Tibial artery (tissue), 4 donors: ENCODE measurements at regions of chr12 and their contacts with region 1.

Region 1: DNA sequence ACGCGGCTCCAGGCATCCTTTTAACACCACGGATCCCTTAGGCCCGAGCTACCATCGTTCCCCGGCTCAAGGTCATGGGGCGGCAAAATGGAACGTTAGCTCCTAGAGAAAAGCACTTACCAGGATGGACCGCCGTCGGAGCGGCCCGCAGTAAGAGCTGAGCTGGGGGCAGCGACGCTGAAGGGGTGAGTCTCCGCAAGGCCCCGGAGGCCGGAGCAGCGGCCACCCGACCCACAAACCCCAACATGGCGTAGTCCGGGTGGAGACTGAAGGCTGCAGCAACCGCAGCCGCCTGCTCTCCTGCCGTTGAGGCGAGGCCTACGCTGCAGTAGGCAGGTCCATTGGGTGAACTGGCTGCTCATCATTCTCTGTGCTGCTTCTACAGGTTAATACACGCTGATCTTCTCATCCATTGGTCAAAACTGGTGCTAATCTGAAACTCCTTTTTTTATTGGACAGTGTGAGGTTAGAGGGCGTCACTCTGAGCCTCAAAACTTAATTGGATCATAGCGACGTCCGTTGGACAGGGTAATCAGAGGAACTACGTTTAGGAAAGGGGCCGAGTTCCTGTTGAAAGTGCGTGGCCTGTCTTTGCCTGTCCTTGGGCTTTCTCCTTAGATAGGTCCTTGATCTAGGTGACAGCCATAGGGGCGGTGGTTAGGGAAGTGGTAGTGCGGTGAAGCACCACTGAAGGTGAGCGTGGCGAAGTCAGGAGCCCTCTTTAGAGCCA is at the start of gene ATP5F1B:
- DNase-seq: peak; percentile 97 to 98
- H3K4me3 ChIP-seq: peak within 1 kb of the TSS; percentile 87 to 96
- H3K27ac ChIP-seq: peak within 1 kb of the TSS; percentile 91 to 96
- H3K4me1 ChIP-seq: peaks cover 0 to 24% (median 20%) of the 10 kb centered on the region in 4 donors
- H3K27me3 ChIP-seq: no peaks in the 10 kb centered on the region
- CTCF ChIP-seq: peak in 1 of 2 experiments; percentile 14

Region 2: GRCh38 chr12:56413392-56413791 is 232.5 kb before region 1 on chr12:
- intact Hi-C with region 1: no loop called
- DNase-seq: no peak
- H3K4me3 ChIP-seq: no peak overlapping the region
- H3K27ac ChIP-seq: no peak overlapping the region
- H3K4me1 ChIP-seq: no peaks in the 10 kb centered on the region
- H3K27me3 ChIP-seq: no peaks in the 10 kb centered on the region
- CTCF ChIP-seq: no peak

Region 3: GRCh38 chr12:56670836-56671235 is 25.0 kb after region 1 on chr12:
- intact Hi-C with region 1: no loop called
- DNase-seq: peak in 1 of 2 donors; percentile 34
- H3K4me3 ChIP-seq: no peak overlapping the region
- H3K27ac ChIP-seq: no peak overlapping the region
- H3K4me1 ChIP-seq: peaks cover 0 to 22% (median 2%) of the 10 kb centered on the region in 4 donors
- H3K27me3 ChIP-seq: no peaks in the 10 kb centered on the region
- CTCF ChIP-seq: no peak

Region 4: DNA sequence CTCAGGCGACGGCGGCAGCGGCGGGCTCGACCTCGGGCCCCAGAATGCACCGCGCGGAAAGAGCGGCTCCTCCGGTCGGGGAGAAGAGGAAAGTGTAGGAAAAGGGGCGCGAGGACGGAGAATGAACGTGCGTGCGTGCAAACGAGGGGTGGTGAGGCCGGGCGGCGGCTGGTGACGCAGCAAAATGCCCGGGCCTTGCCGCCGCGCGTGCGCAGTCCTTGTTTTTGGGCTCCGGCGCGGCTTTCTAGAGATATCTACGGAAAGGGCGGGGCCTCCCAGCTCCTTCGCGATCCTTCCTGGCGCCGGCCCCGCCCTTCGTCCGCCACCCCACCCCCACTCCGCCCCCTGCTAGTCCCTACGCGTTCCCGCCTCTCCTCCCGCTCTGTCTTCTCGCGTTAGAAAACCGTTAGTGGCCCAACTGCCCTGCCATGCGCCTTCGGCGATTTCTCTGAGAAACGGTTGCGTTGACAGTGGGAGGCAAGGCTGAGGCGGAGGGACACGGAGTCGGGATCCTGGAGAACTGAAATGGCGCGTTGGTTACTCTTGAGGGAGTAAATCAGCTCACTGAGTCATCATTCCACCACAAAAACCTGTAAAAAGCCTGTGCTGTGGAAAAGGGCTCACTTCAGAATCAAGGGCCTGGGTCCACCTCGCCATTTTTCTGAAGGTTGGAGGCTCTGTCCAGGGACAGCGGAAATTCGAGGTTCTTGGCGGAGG is 42.4 kb after region 1 on chr12 and contains the start of gene PTGES3:
- intact Hi-C with region 1: loop called (anchors 5 kb)
- DNase-seq: peak; percentile 96 to 99
- H3K4me3 ChIP-seq: peak within 1 kb of the TSS; percentile 80 to 97
- H3K27ac ChIP-seq: peak within 1 kb of the TSS; percentile 98 to 100
- H3K4me1 ChIP-seq: peaks cover 0 to 45% (median 16%) of the 10 kb centered on the region in 4 donors
- H3K27me3 ChIP-seq: no peaks in the 10 kb centered on the region
- CTCF ChIP-seq: no peak

Region 5: GRCh38 chr12:56724972-56725722 is 79.3 kb after region 1 on chr12 and contains the start of gene NACA:
- intact Hi-C with region 1: loop called (anchors 10 kb)
- DNase-seq: peak; percentile 99 to 100
- H3K4me3 ChIP-seq: peak within 1 kb of the TSS; percentile 63 to 75
- H3K27ac ChIP-seq: peak within 1 kb of the TSS; percentile 80 to 88
- H3K4me1 ChIP-seq: peaks cover 0 to 50% (median 37%) of the 10 kb centered on the region in 4 donors
- H3K27me3 ChIP-seq: no peaks in the 10 kb centered on the region
- CTCF ChIP-seq: no peak

Region 6: DNA sequence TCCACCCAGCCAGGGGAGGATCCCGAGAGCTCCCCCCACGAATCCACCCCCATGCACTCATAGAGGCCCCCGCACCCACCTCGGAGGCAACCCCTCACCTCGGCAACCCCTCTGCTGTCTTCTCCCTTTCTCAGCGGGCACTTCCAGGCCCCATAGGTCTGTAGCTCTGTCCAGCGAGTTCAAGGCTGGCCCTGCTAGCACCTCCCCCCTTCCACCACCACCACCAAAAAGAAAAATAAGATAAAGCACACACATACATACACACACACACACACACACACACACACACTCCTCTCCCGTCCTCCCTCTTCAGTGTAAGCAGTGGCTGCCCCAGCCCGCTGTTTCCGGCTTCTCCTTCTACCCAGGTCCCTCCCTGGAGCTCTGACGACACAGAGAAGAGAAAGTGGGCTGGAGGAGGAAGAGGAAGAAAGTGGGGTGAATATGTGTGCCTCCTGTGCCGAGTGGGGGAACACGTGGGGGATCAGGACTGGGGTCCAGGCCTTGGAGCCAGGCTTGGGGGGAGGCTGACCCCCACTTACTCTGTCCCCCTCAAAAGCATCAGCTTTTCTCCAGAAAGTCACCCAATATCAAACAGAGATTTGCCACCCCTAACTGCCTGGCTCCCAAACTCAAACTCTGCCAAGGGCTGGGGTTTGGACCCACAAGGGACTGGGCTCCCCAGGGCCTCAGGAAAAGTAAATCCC is 465.3 kb after region 1 on chr12 and contains the start of gene STAT6:
- intact Hi-C with region 1: no loop called
- DNase-seq: peak; percentile 93 to 94
- H3K4me3 ChIP-seq: peak within 1 kb of the TSS; percentile 65 to 74
- H3K27ac ChIP-seq: peak within 1 kb of the TSS; percentile 96 to 99
- H3K4me1 ChIP-seq: peaks cover 4 to 39% (median 31%) of the 10 kb centered on the region in 4 donors
- H3K27me3 ChIP-seq: no peaks in the 10 kb centered on the region
- CTCF ChIP-seq: no peak

Region 7: GRCh38 chr12:57389033-57389432 is 743.2 kb after region 1 on chr12:
- intact Hi-C with region 1: no loop called
- DNase-seq: no peak
- H3K4me3 ChIP-seq: no peak overlapping the region
- H3K27ac ChIP-seq: no peak overlapping the region
- H3K4me1 ChIP-seq: peaks cover 0 to 8% (median 0%) of the 10 kb centered on the region in 4 donors
- H3K27me3 ChIP-seq: no peaks in the 10 kb centered on the region
- CTCF ChIP-seq: no peak